A549 (cell line): ENCODE measurements at regions of chr1 and their contacts with region 1.

Region 1: GRCh38 chr1:100606438-100606837 is 68.5 kb downstream of the GPR88 start:
- DNase-seq: peak in 1 of 2 experiments; percentile 54
- ATAC-seq: peak; percentile 71 to 83; a peak in 3 of 6 replicates
- H3K4me3 ChIP-seq: no peak overlapping the region
- H3K27ac ChIP-seq: no peak overlapping the region
- H3K4me1 ChIP-seq: peaks cover 5% of the 10 kb centered on the region; the same call in 1 of the 3 replicates
- CTCF ChIP-seq: peak; percentile 63
- EP300 ChIP-seq: no peak
- POLR2A ChIP-seq: no peak
- RAD21 ChIP-seq: peak; percentile 79 to 84

Region 2: DNA sequence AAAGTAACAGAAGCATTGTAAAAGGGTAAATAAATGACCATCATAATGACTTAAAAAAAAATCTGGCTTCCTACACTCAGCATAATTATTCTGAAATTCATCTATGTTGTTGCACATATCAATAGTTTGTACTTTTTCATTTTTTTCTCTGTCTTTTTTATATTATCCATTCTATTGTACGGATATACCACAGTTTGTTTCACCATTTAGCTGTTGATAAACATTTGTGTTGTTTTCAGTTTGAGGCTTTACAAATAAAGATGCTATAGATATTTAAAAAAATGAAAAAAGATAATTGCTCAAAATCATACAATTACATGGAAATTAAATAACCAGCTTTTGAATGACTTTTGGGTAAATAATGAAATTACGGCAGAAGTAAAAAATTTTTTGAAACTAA is 36.5 kb before region 1 on chr1:
- CTCF ChIA-PET with region 1: no interaction called
- POLR2A ChIA-PET with region 1: no interaction called
- DNase-seq: no peak
- ATAC-seq: no peak
- H3K4me3 ChIP-seq: no peak overlapping the region
- H3K27ac ChIP-seq: no peak overlapping the region
- H3K4me1 ChIP-seq: no peaks in the 10 kb centered on the region
- CTCF ChIP-seq: no peak
- EP300 ChIP-seq: no peak
- POLR2A ChIP-seq: no peak
- RAD21 ChIP-seq: no peak

Region 3: GRCh38 chr1:100866041-100866900 is 259.8 kb after region 1 on chr1:
- CTCF ChIA-PET with region 1: interaction called, 31 read pairs
- POLR2A ChIA-PET with region 1: no interaction called
- DNase-seq: peak; percentile 5 to 28
- ATAC-seq: peak; percentile 64 to 70; a peak in 3 of 6 replicates
- H3K4me3 ChIP-seq: no peak overlapping the region
- H3K27ac ChIP-seq: 0 out of 6 replicates have a peak overlapping the region, but pooled peaks of 1 of the 2 experiments have one; percentile 17
- H3K4me1 ChIP-seq: 0 out of 3 replicates have a peak, but pooled peaks cover 3% of the 10 kb centered on the region
- CTCF ChIP-seq: peak; percentile 56
- EP300 ChIP-seq: no peak
- POLR2A ChIP-seq: no peak
- RAD21 ChIP-seq: peak; percentile 60 to 77